BJ (cell line): ENCODE measurements at regions of chr2 and their contacts with region 1.

Region 1: DNA sequence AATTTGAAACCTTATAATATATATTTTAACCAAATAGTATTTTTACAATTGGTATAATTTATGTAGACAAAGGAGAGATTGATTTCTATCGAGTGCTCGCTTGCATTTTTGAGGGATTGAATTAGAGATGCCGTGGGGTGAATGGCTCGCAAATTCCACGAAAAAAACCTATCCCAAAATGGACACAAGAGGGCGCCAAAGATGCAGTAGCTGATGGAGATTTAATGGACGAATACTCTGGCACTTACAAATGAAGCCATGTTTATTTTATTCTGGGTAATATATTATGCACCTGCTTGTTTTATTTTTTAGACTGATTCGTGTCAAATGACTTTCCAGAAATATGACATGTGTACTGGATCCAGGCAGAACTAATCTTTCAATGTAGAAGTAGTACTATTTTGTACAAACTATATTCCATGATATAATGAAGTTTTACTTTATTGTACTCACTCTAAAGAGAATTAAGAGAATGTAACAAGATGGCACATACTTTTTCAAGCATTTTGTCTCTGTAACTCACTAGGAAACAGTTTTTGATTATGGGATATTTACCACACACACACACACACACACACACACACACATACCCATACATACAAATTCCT is 505.4 kb downstream of the PLCL1 start:
- DNase-seq: no peak
- H3K4me3 ChIP-seq: no peak overlapping the region
- H3K27me3 ChIP-seq: peaks cover 1% of the 10 kb centered on the region; the same call in 1 of the 2 replicates
- CTCF ChIP-seq: peak; percentile 89

Region 2: DNA sequence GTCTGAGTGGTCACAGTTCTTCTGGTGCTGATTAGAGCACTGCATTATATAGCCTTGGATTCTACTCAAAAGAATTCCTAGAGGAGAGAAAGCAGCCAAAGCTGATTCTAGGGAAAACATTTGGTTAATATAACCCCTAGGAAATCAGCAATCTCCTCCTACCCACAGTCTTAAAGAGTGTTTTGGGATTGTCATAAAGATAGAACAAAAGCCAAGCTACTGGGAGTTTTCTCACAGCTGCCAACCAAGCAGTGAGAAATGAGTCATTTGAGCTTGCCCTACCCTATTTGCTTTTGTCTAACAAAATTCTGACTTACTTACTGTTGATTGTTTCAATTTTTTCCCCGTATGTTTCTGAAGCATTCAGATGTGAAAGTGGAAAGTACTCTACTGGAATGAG is 36.1 kb before region 1 on chr2:
- CTCF ChIA-PET with region 1: no interaction called
- POLR2A ChIA-PET with region 1: no interaction called
- DNase-seq: no peak
- H3K4me3 ChIP-seq: no peak overlapping the region
- H3K27me3 ChIP-seq: no peaks in the 10 kb centered on the region
- CTCF ChIP-seq: no peak

Region 3: DNA sequence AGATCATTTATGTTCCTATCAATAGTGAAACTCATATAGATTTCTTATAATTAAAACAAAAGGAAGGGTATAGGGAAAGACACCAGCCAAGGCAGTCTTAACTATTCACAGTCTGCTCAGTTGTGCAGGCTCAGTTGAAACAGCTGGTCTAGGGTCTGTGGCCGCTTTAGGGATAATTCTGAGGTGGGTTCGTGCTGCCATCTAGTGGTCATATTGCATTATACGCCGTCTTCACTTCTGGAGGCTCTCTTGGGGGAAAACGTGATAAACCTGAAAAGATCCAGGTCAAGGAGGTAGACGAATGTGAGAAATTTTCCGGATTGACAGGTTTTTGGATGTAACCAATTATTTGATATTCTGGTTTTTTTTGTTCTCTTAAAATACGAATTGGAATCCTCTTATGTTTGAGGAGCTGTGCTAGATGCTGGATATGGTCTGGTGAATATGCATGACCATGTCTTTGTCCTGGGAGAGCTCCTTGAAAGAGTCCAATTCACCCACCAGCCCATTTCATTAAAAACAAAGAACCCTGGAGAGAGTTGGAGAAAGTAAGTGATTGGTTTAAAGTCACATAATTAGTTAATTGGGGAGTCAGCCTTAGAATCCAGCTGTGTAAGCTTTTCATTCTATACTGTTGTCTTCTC is 13.0 kb before region 1 on chr2:
- CTCF ChIA-PET with region 1: interaction called, 34 read pairs
- POLR2A ChIA-PET with region 1: no interaction called
- DNase-seq: no peak
- H3K4me3 ChIP-seq: no peak overlapping the region
- H3K27me3 ChIP-seq: peaks cover 1% of the 10 kb centered on the region; the same call in 1 of the 2 replicates
- CTCF ChIP-seq: peak; percentile 79

Region 4: GRCh38 chr2:198322294-198322693 is 12.5 kb after region 1 on chr2:
- CTCF ChIA-PET with region 1: interaction called, 14 read pairs
- POLR2A ChIA-PET with region 1: no interaction called
- DNase-seq: no peak
- H3K4me3 ChIP-seq: no peak overlapping the region
- H3K27me3 ChIP-seq: no peaks in the 10 kb centered on the region; the same call in 1 of the 2 replicates
- CTCF ChIP-seq: 0 out of 2 replicates have a peak, but pooled peaks have one; percentile 22